Caco-2 (cell line): ENCODE measurements at regions of chr3 and their contacts with region 1.

Region 1: DNA sequence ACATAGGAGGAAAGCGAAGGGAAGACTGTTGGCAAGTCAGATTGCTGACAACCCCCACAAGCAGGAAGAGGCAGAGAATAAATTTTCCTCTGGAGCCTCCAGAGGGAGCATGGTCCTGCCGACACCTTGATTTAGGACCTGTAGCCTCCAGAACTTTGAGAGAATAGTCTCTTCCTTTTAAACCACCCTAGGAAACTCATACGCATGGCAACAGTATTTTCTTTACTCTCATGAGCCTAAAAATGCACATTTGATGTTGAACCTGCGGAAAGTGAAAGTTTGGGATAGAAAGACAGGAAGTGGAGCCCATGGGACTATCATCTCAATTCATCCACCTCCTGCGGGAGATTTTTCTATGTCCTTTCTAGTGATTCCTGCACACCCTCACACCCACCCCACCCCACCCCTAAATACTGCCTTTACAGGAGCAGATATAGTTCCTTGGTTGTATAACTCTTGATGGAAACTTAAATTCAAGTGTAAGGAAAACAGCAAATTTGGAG is 116.7 kb upstream of the LPP start:
- DNase-seq: peak; percentile 82 to 88
- H3K4me3 ChIP-seq: no peak overlapping the region
- H3K4me3 Mint-ChIP-seq: peak overlapping the region; percentile 40
- H3K27ac Mint-ChIP-seq: peak overlapping the region; percentile 53
- H3K4me1 ChIP-seq: peaks cover 34% of the 10 kb centered on the region
- H3K4me1 Mint-ChIP-seq: peaks cover 31% of the 10 kb centered on the region
- H3K27me3 ChIP-seq: no peaks in the 10 kb centered on the region
- H3K27me3 Mint-ChIP-seq: no peaks in the 10 kb centered on the region
- CTCF ChIP-seq: peak; percentile 51 to 77

Region 2: GRCh38 chr3:187745201-187746058 is 291.8 kb before region 1 on chr3 and contains the start of gene BCL6:
- CTCF ChIA-PET with region 1: interaction called, 3 read pairs
- POLR2A ChIA-PET with region 1: no interaction called
- intact Hi-C with region 1: loop called (anchors 1 kb)
- DNase-seq: peak; percentile 91 to 95
- H3K4me3 ChIP-seq: peak within 1 kb of the TSS; percentile 73
- H3K4me3 Mint-ChIP-seq: peak within 1 kb of the TSS; percentile 98
- H3K27ac Mint-ChIP-seq: peak within 1 kb of the TSS; percentile 97
- H3K4me1 ChIP-seq: peaks cover 37% of the 10 kb centered on the region
- H3K4me1 Mint-ChIP-seq: peaks cover 12% of the 10 kb centered on the region
- H3K27me3 ChIP-seq: no peaks in the 10 kb centered on the region
- H3K27me3 Mint-ChIP-seq: no peaks in the 10 kb centered on the region
- CTCF ChIP-seq: no peak
- total RNA-seq, gene BCL6: 35.8 and 40.4 TPM in 2 replicates

Region 3: DNA sequence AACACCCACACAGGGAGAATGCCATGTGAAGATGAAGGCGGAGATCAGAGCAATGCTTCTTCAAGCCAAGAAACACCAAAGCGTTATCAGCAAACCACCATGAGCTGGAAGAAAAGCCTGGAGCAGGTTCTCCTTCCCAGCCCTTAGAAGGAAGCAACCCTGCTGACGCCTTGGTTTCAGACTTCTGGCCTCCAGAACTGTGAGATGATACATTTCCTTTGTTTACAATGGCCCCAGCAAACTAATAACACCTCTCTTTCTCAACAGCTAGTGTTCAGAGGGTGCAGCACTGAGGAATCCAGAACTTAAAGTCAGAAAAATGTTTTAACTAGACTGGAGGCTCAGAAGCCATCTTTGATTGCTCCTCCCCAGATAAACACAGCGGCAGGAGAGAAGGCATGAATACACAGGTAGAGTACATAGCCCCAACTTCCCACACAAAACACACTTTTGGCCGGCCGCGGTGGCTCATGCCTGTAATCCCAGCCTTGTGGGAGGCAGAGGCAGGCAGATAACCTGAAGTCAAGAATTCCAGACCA is 15.7 kb before region 1 on chr3:
- CTCF ChIA-PET with region 1: no interaction called
- POLR2A ChIA-PET with region 1: no interaction called
- intact Hi-C with region 1: loop called (anchors 1 kb)
- DNase-seq: peak; percentile 50 to 67
- H3K4me3 ChIP-seq: no peak overlapping the region
- H3K4me3 Mint-ChIP-seq: no peak overlapping the region
- H3K27ac Mint-ChIP-seq: peak overlapping the region; percentile 63
- H3K4me1 ChIP-seq: peaks cover 11% of the 10 kb centered on the region
- H3K4me1 Mint-ChIP-seq: no peaks in the 10 kb centered on the region
- H3K27me3 ChIP-seq: no peaks in the 10 kb centered on the region
- H3K27me3 Mint-ChIP-seq: no peaks in the 10 kb centered on the region
- CTCF ChIP-seq: no peak

Region 4: GRCh38 chr3:188082031-188082430 is 44.8 kb after region 1 on chr3:
- CTCF ChIA-PET with region 1: no interaction called
- POLR2A ChIA-PET with region 1: no interaction called
- intact Hi-C with region 1: loop called (anchors 1 kb)
- DNase-seq: no peak
- H3K4me3 ChIP-seq: no peak overlapping the region
- H3K4me3 Mint-ChIP-seq: no peak overlapping the region
- H3K27ac Mint-ChIP-seq: no peak overlapping the region
- H3K4me1 ChIP-seq: peaks cover 34% of the 10 kb centered on the region
- H3K4me1 Mint-ChIP-seq: peaks cover 47% of the 10 kb centered on the region
- H3K27me3 ChIP-seq: no peaks in the 10 kb centered on the region
- H3K27me3 Mint-ChIP-seq: no peaks in the 10 kb centered on the region
- CTCF ChIP-seq: no peak

Region 5: DNA sequence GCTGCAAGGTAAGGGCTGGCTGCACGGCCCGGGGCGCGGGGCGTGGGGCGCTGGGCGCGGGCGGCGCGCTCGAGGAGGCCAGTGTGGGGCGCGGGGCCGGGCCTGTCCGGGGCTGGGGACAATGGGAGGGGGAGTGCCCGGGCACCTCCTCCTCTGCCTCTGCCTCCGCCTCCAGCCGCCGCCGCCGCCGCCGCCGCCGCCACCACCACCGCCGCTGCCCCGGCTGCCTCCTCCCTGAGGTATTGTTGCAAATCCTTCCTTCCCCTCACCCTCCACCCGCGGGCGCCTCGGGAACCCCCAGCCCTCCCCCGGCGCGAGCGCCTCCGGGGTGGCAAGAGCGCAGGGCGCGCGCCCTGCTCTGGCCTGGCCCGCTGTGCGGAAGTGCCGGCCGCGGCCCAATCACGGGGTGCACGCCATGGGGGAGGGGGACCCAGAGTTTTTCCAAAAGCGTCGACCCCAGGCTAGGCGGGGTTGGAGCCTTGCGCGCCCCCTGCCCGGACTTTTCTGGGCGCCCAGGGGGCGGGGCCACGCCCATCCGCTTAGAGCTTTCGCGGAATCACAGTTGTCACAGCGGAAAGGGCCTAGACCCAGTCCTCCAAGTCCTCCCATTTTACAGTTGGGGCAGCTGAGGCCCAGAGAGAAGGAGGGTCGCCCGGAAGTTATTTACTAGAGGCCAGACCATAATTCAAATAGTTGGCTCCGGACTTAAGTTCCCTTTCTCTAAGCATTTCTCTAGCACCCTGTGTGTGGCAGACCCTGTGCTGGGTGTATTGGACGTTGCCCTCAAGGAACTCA is 116.9 kb after region 1 on chr3 and contains the start of gene LPP:
- CTCF ChIA-PET with region 1: no interaction called
- POLR2A ChIA-PET with region 1: interaction called, 4 read pairs
- intact Hi-C with region 1: loop called (anchors 1 kb)
- DNase-seq: peak; percentile 79 to 86
- H3K4me3 ChIP-seq: peak within 1 kb of the TSS; percentile 68
- H3K4me3 Mint-ChIP-seq: peak within 1 kb of the TSS; percentile 84
- H3K27ac Mint-ChIP-seq: peak within 1 kb of the TSS; percentile 89
- H3K4me1 ChIP-seq: peaks cover 66% of the 10 kb centered on the region
- H3K4me1 Mint-ChIP-seq: peaks cover 48% of the 10 kb centered on the region
- H3K27me3 ChIP-seq: no peaks in the 10 kb centered on the region
- H3K27me3 Mint-ChIP-seq: no peaks in the 10 kb centered on the region
- CTCF ChIP-seq: peak in 1 of 2 experiments; percentile 27
- total RNA-seq, gene LPP: 120 and 147 TPM in 2 replicates

Region 6: DNA sequence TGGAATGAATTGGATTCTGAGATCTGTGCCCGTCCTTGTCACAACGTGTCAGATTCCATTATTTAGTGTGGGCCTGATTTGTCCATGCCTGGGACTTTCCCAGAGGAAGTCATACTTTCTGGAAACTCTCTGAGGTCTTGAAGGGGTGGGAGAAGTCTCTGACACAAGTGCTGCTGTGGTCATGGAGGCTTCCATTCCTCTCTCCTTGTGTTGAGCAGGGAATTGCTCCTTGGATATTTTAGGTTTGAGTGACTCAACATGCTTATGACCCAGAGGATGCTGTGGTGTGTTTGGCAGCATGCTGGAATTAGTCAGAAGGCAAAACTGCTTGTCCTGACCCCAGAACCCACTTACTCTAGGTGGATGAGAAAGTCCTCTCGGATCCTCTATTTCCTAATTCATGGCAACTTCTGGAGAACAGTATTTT is 248.8 kb after region 1 on chr3:
- CTCF ChIA-PET with region 1: no interaction called
- POLR2A ChIA-PET with region 1: no interaction called
- intact Hi-C with region 1: loop called (anchors 1 kb)
- DNase-seq: no peak
- H3K4me3 ChIP-seq: no peak overlapping the region
- H3K4me3 Mint-ChIP-seq: no peak overlapping the region
- H3K27ac Mint-ChIP-seq: no peak overlapping the region
- H3K4me1 ChIP-seq: peaks cover 38% of the 10 kb centered on the region
- H3K4me1 Mint-ChIP-seq: peaks cover 45% of the 10 kb centered on the region
- H3K27me3 ChIP-seq: no peaks in the 10 kb centered on the region
- H3K27me3 Mint-ChIP-seq: no peaks in the 10 kb centered on the region
- CTCF ChIP-seq: no peak